GM10248 (cell line): ENCODE measurements at regions of chr12 and their contacts with region 1.

Region 1: GRCh38 chr12:96399919-96400797 is at the start of gene CDK17:
- DNase-seq: peak; percentile 87
- CTCF ChIP-seq: peak; percentile 34

Region 2: GRCh38 chr12:96343347-96343954 is 56.7 kb before region 1 on chr12:
- CTCF ChIA-PET with region 1: interaction called, 10 read pairs
- POLR2A ChIA-PET with region 1: no interaction called
- DNase-seq: peak; percentile 29
- CTCF ChIP-seq: no peak

Region 3: GRCh38 chr12:96387981-96388380 is 12.2 kb before region 1 on chr12:
- CTCF ChIA-PET with region 1: interaction called, 44 read pairs
- POLR2A ChIA-PET with region 1: no interaction called
- DNase-seq: no peak
- CTCF ChIP-seq: no peak

Region 4: GRCh38 chr12:96412431-96412830 is 12.3 kb after region 1 on chr12:
- CTCF ChIA-PET with region 1: interaction called, 12 read pairs
- POLR2A ChIA-PET with region 1: no interaction called
- DNase-seq: no peak
- CTCF ChIP-seq: no peak

Region 5: DNA sequence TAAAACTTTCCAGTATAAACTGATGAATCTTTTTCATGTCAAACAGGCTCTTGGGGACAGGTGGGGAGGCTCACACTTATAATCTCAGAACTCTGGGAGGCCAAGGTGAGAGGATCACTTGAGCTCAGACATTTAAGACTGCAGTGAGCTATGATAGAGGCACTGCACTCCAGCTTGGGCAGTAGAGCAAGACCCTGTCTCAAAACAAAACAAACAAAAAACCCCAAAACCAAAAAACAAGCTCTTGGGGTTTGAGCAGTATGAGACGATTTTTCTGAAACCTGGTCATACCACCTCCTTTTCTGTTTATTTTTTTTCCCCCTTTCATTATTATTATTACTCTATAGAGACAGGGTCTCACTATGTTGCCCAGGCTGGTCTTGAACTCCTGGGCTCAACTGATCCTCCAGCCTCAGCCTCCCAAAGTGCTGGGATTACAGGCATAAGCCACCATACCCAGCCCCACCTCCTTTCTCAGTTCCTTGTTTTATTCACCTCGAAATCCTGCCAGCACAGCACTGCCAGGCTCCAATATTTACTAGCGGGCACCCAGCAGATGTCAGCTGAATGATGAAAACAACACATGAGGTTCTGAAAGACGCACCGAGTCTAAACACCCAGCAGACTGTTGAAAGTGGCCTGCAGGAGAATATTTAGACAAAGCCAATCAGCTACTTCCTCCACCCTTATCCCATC is 19.6 kb after region 1 on chr12:
- CTCF ChIA-PET with region 1: interaction called, 20 read pairs
- POLR2A ChIA-PET with region 1: no interaction called
- DNase-seq: no peak
- CTCF ChIP-seq: no peak

Region 6: GRCh38 chr12:96489103-96490056 is 89.2 kb after region 1 on chr12 and contains the start of gene CFAP54:
- CTCF ChIA-PET with region 1: interaction called, 13 read pairs
- POLR2A ChIA-PET with region 1: no interaction called
- DNase-seq: peak; percentile 93
- CTCF ChIP-seq: peak; percentile 89